ENCODE measurements at regions of chr5 and their contacts with region 1.

Region 1: DNA sequence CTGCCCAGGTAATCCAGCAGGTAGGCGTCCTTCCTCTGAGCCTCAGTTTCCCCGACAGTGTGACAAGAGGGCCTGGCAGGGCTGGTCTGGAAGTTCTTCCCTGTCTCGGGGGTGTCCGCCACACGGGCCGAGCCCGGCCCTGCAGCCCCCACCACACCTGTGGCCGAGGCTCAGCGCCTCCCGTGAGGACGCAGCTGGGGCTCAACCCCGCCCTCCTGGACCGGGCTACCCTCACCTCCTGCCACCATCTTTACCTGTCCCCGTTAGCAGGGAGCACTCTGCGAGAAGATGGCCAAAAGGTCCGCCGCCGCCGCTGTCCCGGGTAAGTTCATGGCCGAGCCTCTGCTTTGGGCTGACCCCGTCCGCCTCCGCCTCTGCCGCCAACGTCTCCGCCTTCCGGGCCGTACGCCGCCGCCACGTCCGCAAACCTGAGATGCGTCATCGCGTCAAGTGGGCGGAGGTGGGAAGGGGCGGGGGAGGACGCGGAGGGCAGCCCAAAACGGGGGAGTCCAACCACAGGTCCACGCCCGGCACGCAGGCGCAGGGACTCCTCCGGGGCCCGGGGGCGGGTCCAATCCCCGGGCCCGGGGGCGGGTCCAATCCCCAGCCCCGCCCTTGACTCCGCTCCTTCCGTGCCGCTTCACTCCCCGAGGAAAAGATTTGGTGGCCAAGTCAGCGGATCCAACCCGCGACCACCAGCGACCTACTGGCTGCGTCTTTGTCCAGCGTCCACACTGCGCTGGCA is at the start of gene LYSMD3:
- DNase-seq: peak; percentile 96
- ATAC-seq: peak; percentile 95
- H3K4me3 Mint-ChIP-seq: peak within 1 kb of the TSS; percentile 89
- H3K27ac Mint-ChIP-seq: peak within 1 kb of the TSS; percentile 98
- H3K4me1 Mint-ChIP-seq: peaks cover 22% of the 10 kb centered on the region
- H3K27me3 Mint-ChIP-seq: peaks cover 9% of the 10 kb centered on the region
- CTCF ChIP-seq: no peak
- total RNA-seq, gene LYSMD3: 14.2 to 14.7 TPM

Region 2: DNA sequence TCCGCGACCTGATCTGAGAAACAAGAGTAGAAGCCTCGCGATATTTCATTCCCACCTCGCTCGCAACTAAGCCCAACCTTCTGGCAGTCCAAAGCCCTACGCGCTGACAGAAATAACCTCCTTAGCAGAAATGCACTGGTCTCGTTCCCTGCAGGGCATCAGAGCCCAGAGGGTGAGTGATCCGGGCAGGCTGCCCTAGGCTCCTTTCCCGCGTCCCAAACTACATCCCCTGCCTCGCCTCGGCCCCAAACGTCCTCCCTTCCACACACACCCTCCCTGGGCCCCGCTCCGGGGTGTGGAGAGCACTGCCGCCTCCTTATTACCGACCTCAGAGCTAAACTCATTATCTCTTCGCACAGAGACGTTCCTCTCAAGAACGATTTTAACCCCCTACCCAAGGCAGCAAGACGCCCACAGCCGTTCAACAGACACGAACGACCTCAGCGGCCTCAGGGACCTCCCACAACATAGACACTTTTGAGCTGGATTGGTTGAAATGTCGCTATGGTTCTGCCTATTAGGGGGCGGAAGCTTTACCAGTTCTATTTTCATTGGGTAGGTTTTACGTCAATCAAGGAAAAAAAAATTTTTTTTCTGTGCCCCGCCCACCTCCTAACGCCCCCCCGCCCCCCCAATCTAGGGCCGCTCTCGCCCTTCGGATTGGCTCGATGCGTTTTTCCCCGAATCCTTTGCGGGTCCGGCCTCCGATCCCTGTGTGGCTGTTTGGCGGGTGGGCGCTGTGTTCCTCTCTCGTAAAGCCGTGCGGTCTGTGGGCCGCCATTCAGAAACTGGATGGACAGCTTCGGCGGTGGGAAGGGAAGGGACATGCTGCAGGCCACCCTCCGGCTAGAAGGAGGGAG is 119.8 kb before region 1 on chr5 and contains the start of gene CETN3:
- CTCF ChIA-PET with region 1: interaction called, 10 read pairs
- POLR2A ChIA-PET with region 1: no interaction called
- intact Hi-C with region 1: loop called (anchors 10 kb)
- DNase-seq: peak; percentile 94
- ATAC-seq: peak; percentile 94
- H3K4me3 Mint-ChIP-seq: no peak within 1 kb of the TSS
- H3K27ac Mint-ChIP-seq: no peak within 1 kb of the TSS
- H3K4me1 Mint-ChIP-seq: peaks cover 17% of the 10 kb centered on the region
- H3K27me3 Mint-ChIP-seq: no peaks in the 10 kb centered on the region
- CTCF ChIP-seq: no peak
- total RNA-seq, gene CETN3: 46.1 to 49.2 TPM

Region 3: GRCh38 chr5:90438100-90438499 is 91.3 kb before region 1 on chr5:
- CTCF ChIA-PET with region 1: interaction called, 50 read pairs
- POLR2A ChIA-PET with region 1: no interaction called
- intact Hi-C with region 1: loop called (anchors 2 kb)
- DNase-seq: no peak
- ATAC-seq: no peak
- H3K4me3 Mint-ChIP-seq: no peak overlapping the region
- H3K27ac Mint-ChIP-seq: no peak overlapping the region
- H3K4me1 Mint-ChIP-seq: peaks cover 5% of the 10 kb centered on the region
- H3K27me3 Mint-ChIP-seq: no peaks in the 10 kb centered on the region
- CTCF ChIP-seq: no peak

Region 4: DNA sequence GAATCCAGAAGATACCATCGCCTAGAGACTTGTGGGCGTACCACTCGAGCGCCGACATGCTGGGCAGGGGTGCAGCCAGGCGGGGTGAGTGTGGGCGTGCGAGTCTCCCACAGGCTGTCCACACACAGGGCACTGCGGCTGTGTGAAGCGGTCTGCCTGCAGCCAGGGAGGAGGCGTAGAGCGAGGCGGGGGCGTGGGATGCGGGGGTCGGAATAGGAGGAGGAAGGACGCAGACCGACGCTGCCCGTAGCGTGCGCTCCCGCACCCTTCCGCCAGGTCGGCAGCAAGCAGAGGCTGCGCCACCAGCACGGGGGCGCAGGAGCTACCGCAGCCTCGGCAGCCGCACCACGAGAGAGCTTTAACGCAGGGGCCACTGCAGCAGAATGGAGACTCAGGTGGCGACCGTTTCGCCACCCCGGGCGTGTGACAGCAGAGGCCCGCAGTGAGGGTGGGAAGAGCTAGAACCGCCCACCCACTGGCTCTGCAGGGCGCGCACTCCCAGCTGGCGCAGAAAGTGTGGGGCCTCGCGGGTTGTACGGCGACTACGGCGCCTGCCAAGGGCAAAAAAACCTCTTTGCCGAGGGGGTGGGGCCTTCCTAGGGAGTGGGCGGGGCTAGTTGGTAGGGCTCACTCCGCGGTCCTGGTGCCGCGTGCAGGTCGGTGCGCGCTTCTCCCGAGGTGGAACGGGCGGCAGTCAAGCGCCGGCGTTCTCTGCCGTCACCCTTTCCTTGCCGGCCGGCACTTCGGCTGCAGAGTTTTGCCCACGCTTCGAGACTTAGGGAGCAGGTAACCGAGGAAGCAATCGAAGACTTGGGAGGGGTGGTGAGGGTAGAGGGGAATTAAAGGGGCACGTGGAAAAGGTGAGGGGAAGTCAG is 54.9 kb before region 1 on chr5 and contains the starts of genes MBLAC2 and POLR3G:
- CTCF ChIA-PET with region 1: interaction called, 13 read pairs
- POLR2A ChIA-PET with region 1: interaction called, 6 read pairs
- intact Hi-C with region 1: loop called (anchors 5 kb)
- DNase-seq: peak; percentile 95
- ATAC-seq: peak; percentile 93
- H3K4me3 Mint-ChIP-seq: peak within 1 kb of the TSS; percentile 97
- H3K27ac Mint-ChIP-seq: peak within 1 kb of the TSS; percentile 95
- H3K4me1 Mint-ChIP-seq: peaks cover 35% of the 10 kb centered on the region
- H3K27me3 Mint-ChIP-seq: no peaks in the 10 kb centered on the region
- CTCF ChIP-seq: peak; percentile 64
- total RNA-seq, gene MBLAC2: 4.9 to 5.2 TPM
- total RNA-seq, gene POLR3G: 24.0 to 27.1 TPM

Region 5: GRCh38 chr5:90628492-90628891 is 99.1 kb after region 1 on chr5:
- CTCF ChIA-PET with region 1: no interaction called
- POLR2A ChIA-PET with region 1: no interaction called
- intact Hi-C with region 1: no loop called
- DNase-seq: no peak
- ATAC-seq: no peak
- H3K4me3 Mint-ChIP-seq: no peak overlapping the region
- H3K27ac Mint-ChIP-seq: no peak overlapping the region
- H3K4me1 Mint-ChIP-seq: no peaks in the 10 kb centered on the region
- H3K27me3 Mint-ChIP-seq: no peaks in the 10 kb centered on the region
- CTCF ChIP-seq: no peak